ENCODE measurements at regions of chr13 and their contacts with region 1.

Region 1: DNA sequence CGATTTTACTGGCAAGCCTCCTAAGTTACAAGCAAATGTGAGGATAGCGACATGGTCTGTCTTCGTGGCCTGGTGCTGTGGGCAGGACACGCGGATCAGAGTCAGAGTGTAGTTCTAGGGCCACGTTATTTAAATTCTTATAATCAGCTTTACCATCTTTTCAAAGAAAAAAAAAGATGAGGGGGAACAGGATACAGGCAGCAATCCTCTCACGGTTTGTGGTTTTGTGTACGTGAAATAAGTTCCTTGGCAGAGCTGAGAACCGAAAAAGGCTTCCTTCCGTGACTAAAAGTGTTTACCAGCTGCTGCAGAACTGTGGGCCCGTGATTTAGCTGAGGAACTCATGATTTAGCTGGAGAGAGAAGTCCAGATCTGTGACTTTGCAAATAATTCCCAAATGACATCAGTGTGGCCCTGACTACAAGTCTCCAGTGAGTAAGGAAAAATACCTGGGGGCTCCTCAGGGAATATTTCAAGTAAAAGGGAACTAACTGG is 27.2 kb downstream of the RCBTB2 start:
- DNase-seq: peak; percentile 79 to 87 (median 84)
- H3K4me3 ChIP-seq: peak overlapping the region in 1 of 2 donors; percentile 32
- H3K4me3 Mint-ChIP-seq: peak overlapping the region; percentile 58 to 85 (median 73)
- H3K27ac ChIP-seq: peak overlapping the region; percentile 60
- H3K27ac Mint-ChIP-seq: peak overlapping the region; percentile 85 to 98 (median 97)
- H3K4me1 ChIP-seq: peaks cover 60% of the 10 kb centered on the region
- H3K4me1 Mint-ChIP-seq: peaks cover 40 to 80% (median 62%) of the 10 kb centered on the region in 4 donors
- H3K27me3 ChIP-seq: no peaks in the 10 kb centered on the region
- H3K27me3 Mint-ChIP-seq: no peaks in the 10 kb centered on the region

Region 2: GRCh38 chr13:48334534-48335127 is 171.0 kb before region 1 on chr13:
- CTCF ChIA-PET with region 1: interaction called, 3 read pairs
- POLR2A ChIA-PET with region 1: no interaction called
- intact Hi-C with region 1: loop called (anchors 2 kb)
- DNase-seq: peak in 4 of 5 donors; percentile 50 to 55 (median 52)
- H3K4me3 ChIP-seq: no peak overlapping the region
- H3K4me3 Mint-ChIP-seq: no peak overlapping the region
- H3K27ac ChIP-seq: no peak overlapping the region
- H3K27ac Mint-ChIP-seq: peak overlapping the region in 1 of 7 donors; percentile 13
- H3K4me1 ChIP-seq: peaks cover 8% of the 10 kb centered on the region
- H3K4me1 Mint-ChIP-seq: peaks cover 6 to 16% (median 10%) of the 10 kb centered on the region in 4 donors
- H3K27me3 ChIP-seq: no peaks in the 10 kb centered on the region
- H3K27me3 Mint-ChIP-seq: no peaks in the 10 kb centered on the region

Region 3: GRCh38 chr13:48412881-48413351 is 92.7 kb before region 1 on chr13 and contains the start of gene LPAR6:
- CTCF ChIA-PET with region 1: interaction called, 6 read pairs
- POLR2A ChIA-PET with region 1: interaction called, 21 read pairs
- intact Hi-C with region 1: loop called (anchors 1 kb)
- DNase-seq: peak; percentile 45 to 59 (median 47)
- H3K4me3 ChIP-seq: peak within 1 kb of the TSS; percentile 67 to 90
- H3K4me3 Mint-ChIP-seq: peak within 1 kb of the TSS; percentile 89 to 100 (median 98)
- H3K27ac ChIP-seq: peak within 1 kb of the TSS; percentile 84
- H3K27ac Mint-ChIP-seq: peak within 1 kb of the TSS; percentile 94 to 99 (median 98)
- H3K4me1 ChIP-seq: peaks cover 50% of the 10 kb centered on the region
- H3K4me1 Mint-ChIP-seq: peaks cover 18 to 50% (median 36%) of the 10 kb centered on the region in 4 donors
- H3K27me3 ChIP-seq: no peaks in the 10 kb centered on the region
- H3K27me3 Mint-ChIP-seq: no peaks in the 10 kb centered on the region
- total RNA-seq, gene LPAR6: 89.0 to 91.1 TPM

Region 4: DNA sequence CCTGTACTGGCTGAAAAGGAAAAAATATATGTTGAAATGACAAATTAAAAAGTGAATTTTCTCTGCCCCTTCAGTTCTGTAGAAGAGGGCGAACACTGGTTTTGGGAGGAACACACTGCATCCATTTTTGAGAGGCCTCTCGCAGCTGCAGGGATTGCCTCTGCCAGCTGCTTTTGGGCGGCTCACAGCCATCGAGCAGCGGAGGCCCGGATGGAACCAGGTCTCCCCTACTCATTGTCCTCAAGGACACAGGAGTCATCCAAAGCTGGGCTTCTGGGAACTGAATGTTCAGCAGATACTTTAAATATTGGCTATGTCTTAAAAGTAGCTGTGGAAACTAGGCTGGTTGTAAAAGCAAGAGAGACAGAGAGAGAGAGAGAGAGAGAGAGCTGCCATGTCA is 10.1 kb after region 1 on chr13:
- CTCF ChIA-PET with region 1: interaction called, 4 read pairs
- POLR2A ChIA-PET with region 1: interaction called, 16 read pairs
- intact Hi-C with region 1: no loop called
- DNase-seq: no peak
- H3K4me3 ChIP-seq: no peak overlapping the region
- H3K4me3 Mint-ChIP-seq: no peak overlapping the region
- H3K27ac ChIP-seq: no peak overlapping the region
- H3K27ac Mint-ChIP-seq: peak overlapping the region in 1 of 7 donors; percentile 7
- H3K4me1 ChIP-seq: peaks cover under 1% of the 10 kb centered on the region
- H3K4me1 Mint-ChIP-seq: peaks cover 1 to 14% (median 8%) of the 10 kb centered on the region in 4 donors
- H3K27me3 ChIP-seq: no peaks in the 10 kb centered on the region
- H3K27me3 Mint-ChIP-seq: no peaks in the 10 kb centered on the region

Region 5: GRCh38 chr13:48562296-48563066 is 56.8 kb after region 1 on chr13:
- CTCF ChIA-PET with region 1: interaction called, 4 read pairs
- POLR2A ChIA-PET with region 1: interaction called, 42 read pairs
- intact Hi-C with region 1: loop called (anchors 1 kb)
- DNase-seq: peak; percentile 83 to 92 (median 87)
- H3K4me3 ChIP-seq: peak overlapping the region in 1 of 2 donors; percentile 39
- H3K4me3 Mint-ChIP-seq: peak overlapping the region in 7 of 8 donors; percentile 42 to 79 (median 76)
- H3K27ac ChIP-seq: no peak overlapping the region
- H3K27ac Mint-ChIP-seq: peak overlapping the region in 6 of 7 donors; percentile 44 to 89 (median 62)
- H3K4me1 ChIP-seq: peaks cover 56% of the 10 kb centered on the region
- H3K4me1 Mint-ChIP-seq: peaks cover 45 to 68% (median 58%) of the 10 kb centered on the region in 4 donors
- H3K27me3 ChIP-seq: no peaks in the 10 kb centered on the region
- H3K27me3 Mint-ChIP-seq: no peaks in the 10 kb centered on the region

Region 6: GRCh38 chr13:48653472-48653939 is 147.9 kb after region 1 on chr13 and contains the start of gene CYSLTR2:
- CTCF ChIA-PET with region 1: no interaction called
- POLR2A ChIA-PET with region 1: no interaction called
- intact Hi-C with region 1: loop called (anchors 2 kb)
- DNase-seq: peak; percentile 69 to 89 (median 86)
- H3K4me3 ChIP-seq: peak within 1 kb of the TSS; percentile 30 to 55
- H3K4me3 Mint-ChIP-seq: peak within 1 kb of the TSS; percentile 81 to 90 (median 89)
- H3K27ac ChIP-seq: peak within 1 kb of the TSS; percentile 69
- H3K27ac Mint-ChIP-seq: peak within 1 kb of the TSS; percentile 88 to 98 (median 95)
- H3K4me1 ChIP-seq: peaks cover 51% of the 10 kb centered on the region
- H3K4me1 Mint-ChIP-seq: peaks cover 27 to 53% (median 43%) of the 10 kb centered on the region in 4 donors
- H3K27me3 ChIP-seq: no peaks in the 10 kb centered on the region
- H3K27me3 Mint-ChIP-seq: no peaks in the 10 kb centered on the region
- total RNA-seq, gene CYSLTR2: 3.3 to 3.7 TPM